Panc1 (cell line): ENCODE measurements at regions of chr1 and their contacts with region 1.

Region 1: GRCh38 chr1:155308493-155309422 is at the start of gene FDPS:
- DNase-seq: peak; percentile 96
- ATAC-seq: peak; percentile 99
- H3K4me3 ChIP-seq: peak within 1 kb of the TSS; percentile 99
- H3K27ac ChIP-seq: peak within 1 kb of the TSS; percentile 97
- H3K4me1 ChIP-seq: peaks cover 9% of the 10 kb centered on the region; the same call in 1 of the 2 replicates
- H3K27me3 ChIP-seq: no peaks in the 10 kb centered on the region
- CTCF ChIP-seq: no peak
- total RNA-seq, gene FDPS: 255 TPM

Region 2: DNA sequence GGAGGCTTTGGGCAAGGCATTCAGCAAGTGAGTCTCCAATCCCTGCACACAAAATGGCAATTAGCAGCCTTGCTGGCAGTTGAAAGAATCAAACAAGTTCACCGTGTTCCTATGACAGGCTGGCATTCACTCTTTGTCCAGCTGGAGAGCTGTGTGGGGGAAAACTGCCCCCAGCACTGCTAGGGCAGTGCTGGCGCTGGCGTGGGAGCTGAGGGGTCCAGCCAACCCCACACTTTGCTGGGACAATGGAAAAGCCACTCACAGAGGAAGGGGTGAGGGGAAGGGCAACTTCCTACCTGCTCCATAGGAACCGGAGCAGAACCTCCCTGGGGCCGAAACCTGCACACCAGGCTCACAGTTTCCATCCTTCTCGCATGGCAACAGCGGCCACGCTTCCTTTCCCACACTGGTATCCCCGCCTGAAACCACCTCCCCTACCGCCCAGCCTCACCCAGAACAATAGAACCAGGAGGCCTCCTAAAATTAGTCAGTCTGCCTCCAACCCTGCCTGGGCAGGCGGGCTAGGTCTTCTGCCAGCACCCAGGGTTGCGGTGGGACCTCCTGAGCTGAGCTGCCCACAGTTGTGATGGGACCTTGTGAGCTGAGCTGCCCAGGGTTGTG is 411.9 kb before region 1 on chr1:
- CTCF ChIA-PET with region 1: no interaction called
- POLR2A ChIA-PET with region 1: no interaction called
- in situ Hi-C with region 1: no loop called
- intact Hi-C with region 1: no loop called
- DNase-seq: no peak
- ATAC-seq: peak; percentile 56
- H3K4me3 ChIP-seq: no peak overlapping the region
- H3K27ac ChIP-seq: no peak overlapping the region
- H3K4me1 ChIP-seq: no peaks in the 10 kb centered on the region
- H3K27me3 ChIP-seq: peaks cover 5% of the 10 kb centered on the region; the same call in 1 of the 2 replicates
- CTCF ChIP-seq: no peak

Region 3: GRCh38 chr1:155208541-155209311 is 100.0 kb before region 1 on chr1 and contains the start of gene MTX1:
- CTCF ChIA-PET with region 1: no interaction called
- POLR2A ChIA-PET with region 1: interaction called, 12 read pairs
- in situ Hi-C with region 1: no loop called
- intact Hi-C with region 1: no loop called
- DNase-seq: peak; percentile 51
- ATAC-seq: peak; percentile 87
- H3K4me3 ChIP-seq: peak within 1 kb of the TSS; percentile 94 to 99
- H3K27ac ChIP-seq: peak within 1 kb of the TSS; percentile 93
- H3K4me1 ChIP-seq: peaks cover 19% of the 10 kb centered on the region
- H3K27me3 ChIP-seq: no peaks in the 10 kb centered on the region
- CTCF ChIP-seq: no peak
- total RNA-seq, gene MTX1: 53.6 TPM

Region 4: GRCh38 chr1:155250633-155251449 is 57.9 kb before region 1 on chr1:
- CTCF ChIA-PET with region 1: interaction called, 16 read pairs
- POLR2A ChIA-PET with region 1: no interaction called
- in situ Hi-C with region 1: no loop called
- intact Hi-C with region 1: no loop called
- DNase-seq: no peak
- ATAC-seq: peak; percentile 89
- H3K4me3 ChIP-seq: no peak overlapping the region
- H3K27ac ChIP-seq: peak overlapping the region; percentile 9; the same call in 1 of the 2 replicates
- H3K4me1 ChIP-seq: peaks cover 7% of the 10 kb centered on the region
- H3K27me3 ChIP-seq: no peaks in the 10 kb centered on the region
- CTCF ChIP-seq: peak; percentile 100

Region 5: GRCh38 chr1:155282488-155283091 is 26.2 kb before region 1 on chr1:
- CTCF ChIA-PET with region 1: no interaction called
- POLR2A ChIA-PET with region 1: no interaction called
- in situ Hi-C with region 1: no loop called
- intact Hi-C with region 1: loop called (anchors 2 kb)
- DNase-seq: no peak
- ATAC-seq: no peak
- H3K4me3 ChIP-seq: no peak overlapping the region
- H3K27ac ChIP-seq: no peak overlapping the region
- H3K4me1 ChIP-seq: peaks cover 8% of the 10 kb centered on the region
- H3K27me3 ChIP-seq: no peaks in the 10 kb centered on the region
- CTCF ChIP-seq: no peak

Region 6: DNA sequence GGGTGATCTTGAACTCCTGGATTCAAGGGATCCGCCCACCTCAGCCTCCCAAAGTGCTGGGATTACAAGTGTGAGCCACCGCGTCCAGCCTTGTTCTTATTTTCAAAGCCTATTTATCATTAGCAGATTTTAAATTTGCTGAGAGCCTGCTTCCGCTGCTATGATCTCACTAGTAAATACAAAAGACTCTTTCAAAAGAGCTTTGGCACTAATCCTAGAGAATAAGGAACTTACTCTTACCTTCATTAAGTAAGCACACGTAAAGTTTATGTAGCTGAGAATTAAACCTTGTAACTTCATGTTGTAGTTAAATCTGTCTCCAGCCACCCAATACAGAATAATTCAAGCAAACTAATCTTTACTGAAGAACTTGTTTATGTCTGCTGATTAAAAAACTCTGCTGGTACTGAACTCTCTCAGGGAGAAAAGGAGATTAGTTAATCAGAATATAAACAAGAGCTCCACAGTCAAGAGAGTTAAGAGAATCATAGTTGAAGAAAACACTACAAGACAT is 84.2 kb after region 1 on chr1:
- CTCF ChIA-PET with region 1: no interaction called
- POLR2A ChIA-PET with region 1: no interaction called
- in situ Hi-C with region 1: no loop called
- intact Hi-C with region 1: no loop called
- DNase-seq: no peak
- ATAC-seq: no peak
- H3K4me3 ChIP-seq: no peak overlapping the region
- H3K27ac ChIP-seq: no peak overlapping the region
- H3K4me1 ChIP-seq: no peaks in the 10 kb centered on the region
- H3K27me3 ChIP-seq: no peaks in the 10 kb centered on the region
- CTCF ChIP-seq: no peak

Region 7: GRCh38 chr1:156667968-156668709 is 1359.4 kb after region 1 on chr1:
- CTCF ChIA-PET with region 1: no interaction called
- POLR2A ChIA-PET with region 1: interaction called, 12 read pairs
- in situ Hi-C with region 1: no loop called
- intact Hi-C with region 1: no loop called
- DNase-seq: no peak
- ATAC-seq: peak; percentile 20; the same call in 1 of the 2 replicates
- H3K4me3 ChIP-seq: no peak overlapping the region
- H3K27ac ChIP-seq: peak overlapping the region; percentile 56
- H3K4me1 ChIP-seq: peaks cover 52% of the 10 kb centered on the region
- H3K27me3 ChIP-seq: no peaks in the 10 kb centered on the region
- CTCF ChIP-seq: no peak